ENCODE measurements at regions of chr1 and their contacts with region 1.

Region 1: DNA sequence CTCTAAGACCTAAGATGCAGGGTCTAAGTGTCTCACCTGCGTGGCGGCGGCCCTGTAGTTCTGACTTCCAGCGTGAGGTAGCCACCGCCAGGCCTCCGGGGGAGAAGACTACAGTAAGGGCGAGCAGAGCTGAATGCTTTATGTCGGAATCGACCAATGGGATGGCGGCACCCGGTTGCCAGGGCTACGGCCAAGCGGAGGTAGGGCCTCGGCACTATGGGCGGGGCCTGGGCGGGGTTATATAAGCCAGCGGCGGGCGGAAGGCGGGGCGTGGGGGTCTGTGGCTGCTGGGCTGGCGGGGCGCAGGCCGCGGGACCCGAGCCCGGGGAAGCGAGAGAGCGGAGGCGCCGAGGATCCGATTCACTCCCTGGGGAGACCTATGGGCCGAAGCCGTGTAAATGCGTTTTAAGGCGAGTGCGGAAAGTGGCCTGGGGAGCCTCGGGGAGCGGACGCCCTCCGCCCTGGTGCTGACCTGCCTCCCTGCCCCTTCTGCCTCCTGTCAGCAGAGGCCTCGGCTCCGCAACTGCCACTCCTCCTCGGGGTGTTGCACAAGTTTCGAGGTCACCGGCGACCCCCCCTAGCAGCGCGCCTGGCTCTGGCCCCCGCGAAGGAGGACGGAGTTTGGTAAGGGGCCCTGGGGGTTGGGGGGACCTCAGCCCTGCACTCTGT is at the start of gene AZIN2:
- DNase-seq: peak; percentile 95 to 100 (median 97)
- ATAC-seq: peak; percentile 99
- H3K4me3 ChIP-seq: peak within 1 kb of the TSS; percentile 82
- H3K4me3 Mint-ChIP-seq: peak within 1 kb of the TSS; percentile 94
- H3K27ac ChIP-seq: peak within 1 kb of the TSS in 1 of 2 donors; percentile 27
- H3K27ac Mint-ChIP-seq: peak within 1 kb of the TSS; percentile 81
- H3K4me1 ChIP-seq: peaks cover 23% of the 10 kb centered on the region
- H3K4me1 Mint-ChIP-seq: peaks cover 36% of the 10 kb centered on the region
- H3K27me3 ChIP-seq: no peaks in the 10 kb centered on the region
- H3K27me3 Mint-ChIP-seq: no peaks in the 10 kb centered on the region
- CTCF ChIP-seq: no peak
- total RNA-seq, gene AZIN2: 4.6 to 4.9 TPM

Region 2: GRCh38 chr1:32964461-32965250 is 116.4 kb before region 1 on chr1 and contains the start of gene RNF19B:
- CTCF ChIA-PET with region 1: no interaction called
- POLR2A ChIA-PET with region 1: interaction called, 12 read pairs
- intact Hi-C with region 1: loop called (anchors 2 to 10 kb)
- DNase-seq: peak; percentile 87 to 97 (median 94)
- ATAC-seq: peak; percentile 93
- H3K4me3 ChIP-seq: peak within 1 kb of the TSS; percentile 73
- H3K4me3 Mint-ChIP-seq: peak within 1 kb of the TSS; percentile 93
- H3K27ac ChIP-seq: peak within 1 kb of the TSS; percentile 59 to 61
- H3K27ac Mint-ChIP-seq: peak within 1 kb of the TSS; percentile 89
- H3K4me1 ChIP-seq: peaks cover 21% of the 10 kb centered on the region
- H3K4me1 Mint-ChIP-seq: peaks cover 37% of the 10 kb centered on the region
- H3K27me3 ChIP-seq: no peaks in the 10 kb centered on the region
- H3K27me3 Mint-ChIP-seq: no peaks in the 10 kb centered on the region
- CTCF ChIP-seq: no peak
- total RNA-seq, gene RNF19B: 33.4 to 37.4 TPM

Region 3: DNA sequence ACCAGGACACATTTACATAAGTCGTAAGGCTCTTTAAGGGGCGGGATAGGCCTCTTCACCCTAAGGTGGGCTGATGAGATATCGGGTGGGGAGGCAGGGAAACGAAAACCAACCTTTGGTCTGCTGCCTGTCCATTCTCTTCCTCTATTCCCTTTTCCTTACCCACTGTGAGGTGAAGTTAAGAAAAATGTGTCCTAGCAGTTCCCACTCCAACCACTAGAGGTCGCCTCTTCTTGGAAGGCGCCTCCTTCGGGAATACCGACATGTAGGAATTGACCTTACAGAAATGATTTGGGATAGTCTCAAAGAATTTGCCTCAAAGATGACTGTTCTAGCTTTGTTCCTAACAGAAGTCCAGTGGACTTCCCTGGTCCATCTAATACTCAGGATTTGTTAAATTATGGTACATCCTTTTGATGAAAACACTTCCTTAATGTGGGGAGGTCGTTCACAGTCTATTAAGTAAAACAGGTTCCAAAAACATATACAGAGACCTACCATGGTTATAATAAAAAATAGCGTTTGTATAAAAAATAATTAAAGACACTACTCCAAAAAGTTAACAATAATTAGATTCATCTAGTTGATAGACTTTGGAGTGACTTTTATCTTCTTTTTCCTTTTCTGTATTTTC is 14.1 kb after region 1 on chr1:
- CTCF ChIA-PET with region 1: interaction called, 5 read pairs
- POLR2A ChIA-PET with region 1: interaction called, 15 read pairs
- intact Hi-C with region 1: loop called in 1 of 2 experiments (anchors 2 kb)
- DNase-seq: peak in 4 of 14 experiments; percentile 11 to 54 (median 52)
- ATAC-seq: no peak
- H3K4me3 ChIP-seq: no peak overlapping the region
- H3K4me3 Mint-ChIP-seq: no peak overlapping the region
- H3K27ac ChIP-seq: no peak overlapping the region
- H3K27ac Mint-ChIP-seq: no peak overlapping the region
- H3K4me1 ChIP-seq: peaks cover 34% of the 10 kb centered on the region
- H3K4me1 Mint-ChIP-seq: peaks cover 36% of the 10 kb centered on the region
- H3K27me3 ChIP-seq: no peaks in the 10 kb centered on the region
- H3K27me3 Mint-ChIP-seq: no peaks in the 10 kb centered on the region
- CTCF ChIP-seq: peak; percentile 99

Region 4: DNA sequence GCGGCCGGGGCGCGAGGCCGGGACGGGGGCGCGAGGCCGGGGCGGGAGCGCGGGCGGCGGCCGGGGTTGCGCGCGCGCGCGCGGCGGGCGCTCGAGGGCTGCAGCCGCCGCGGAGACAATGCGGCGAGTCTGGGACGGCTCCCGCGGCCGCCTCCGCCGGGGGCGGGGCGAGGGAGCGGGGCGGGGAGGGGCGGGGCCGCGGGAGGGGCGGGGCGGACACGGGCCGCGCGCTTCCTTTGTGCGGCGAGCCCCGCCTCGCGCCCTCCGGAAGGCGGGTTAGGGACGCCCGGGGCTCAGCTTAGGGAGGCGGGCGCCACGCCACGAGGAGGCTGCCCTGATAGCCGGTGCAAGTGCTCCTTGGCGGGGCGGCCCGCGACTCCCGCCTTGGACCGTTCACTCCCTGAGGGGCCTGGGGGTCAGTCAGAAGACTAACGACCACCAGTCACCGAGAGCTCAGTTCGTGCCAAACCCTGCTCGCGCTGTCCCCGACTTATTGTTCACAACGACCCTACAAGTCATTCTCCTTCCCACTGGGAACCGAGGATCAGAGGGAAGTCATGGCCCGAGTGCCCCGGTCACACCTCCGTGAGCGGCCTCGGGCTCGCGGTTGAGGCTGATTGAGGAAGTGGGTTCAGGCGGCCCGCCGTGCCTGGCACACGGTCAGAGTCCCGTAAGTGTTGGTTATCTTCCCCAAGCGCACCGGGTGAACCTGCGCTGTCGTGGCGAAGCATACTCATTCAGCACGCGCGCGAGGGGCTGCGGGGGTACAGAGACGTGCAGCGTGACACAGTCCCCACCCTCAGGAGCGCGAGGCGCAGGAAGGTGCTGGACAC is 269.0 kb after region 1 on chr1:
- CTCF ChIA-PET with region 1: no interaction called
- POLR2A ChIA-PET with region 1: interaction called, 3 read pairs
- intact Hi-C with region 1: loop called in 1 of 2 experiments (anchors 5 kb)
- DNase-seq: peak; percentile 53 to 92 (median 74)
- ATAC-seq: peak; percentile 86
- H3K4me3 ChIP-seq: peak overlapping the region; percentile 90
- H3K4me3 Mint-ChIP-seq: peak overlapping the region; percentile 87
- H3K27ac ChIP-seq: peak overlapping the region in 1 of 2 donors; percentile 56
- H3K27ac Mint-ChIP-seq: peak overlapping the region; percentile 84
- H3K4me1 ChIP-seq: peaks cover 30% of the 10 kb centered on the region
- H3K4me1 Mint-ChIP-seq: peaks cover 46% of the 10 kb centered on the region
- H3K27me3 ChIP-seq: no peaks in the 10 kb centered on the region
- H3K27me3 Mint-ChIP-seq: no peaks in the 10 kb centered on the region
- CTCF ChIP-seq: no peak